Activated CD4-positive, alpha-beta T cell treated with anti-CD3 and anti-CD28 coated beads, Interleukin-2, amount 10 ng/mL, durations not matched to agents 24 days and 14 days (primary cell): ENCODE measurements at regions of chrX and their contacts with region 1.

Region 1: DNA sequence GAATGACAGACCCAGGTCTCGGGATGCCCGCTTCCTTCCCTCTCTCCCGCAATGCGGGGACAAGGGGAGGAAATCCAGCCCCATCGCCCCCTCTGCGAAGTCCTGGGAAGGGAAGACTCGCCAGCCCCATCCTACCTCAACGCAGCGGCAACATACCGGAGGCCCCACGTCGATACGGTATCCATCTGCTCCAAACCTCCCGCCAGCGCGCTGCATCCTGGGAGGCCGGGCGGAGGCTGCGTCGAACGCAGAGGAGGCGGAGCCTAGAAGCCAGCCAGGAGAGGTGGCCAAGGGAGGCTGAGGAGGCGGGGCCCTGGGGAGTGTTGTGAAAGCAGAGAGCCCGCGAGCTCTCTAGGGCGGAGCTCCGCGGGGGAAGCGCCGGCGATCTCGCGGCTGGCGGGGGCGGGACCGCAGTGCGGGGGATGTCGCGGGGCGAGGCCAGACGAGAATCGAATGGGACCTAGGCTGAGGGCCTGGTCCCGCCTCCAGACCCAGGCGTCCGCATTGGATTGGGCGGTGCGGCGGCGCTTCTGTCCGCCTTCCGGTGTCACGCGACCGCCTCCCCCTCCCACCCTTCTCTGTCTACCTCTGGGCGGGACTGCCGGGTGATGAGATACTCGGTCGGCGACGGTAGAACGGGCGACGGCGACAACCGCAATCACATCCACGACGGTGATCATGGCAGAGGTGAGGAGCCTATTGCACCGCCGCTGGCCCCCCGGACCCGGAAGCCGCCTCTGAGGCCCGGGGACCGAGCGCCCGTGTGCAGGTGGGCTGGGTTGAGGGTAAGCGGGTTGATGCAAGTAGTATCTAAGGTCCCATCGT is at the starts of genes FANCB and MOSPD2:
- DNase-seq: peak; percentile 98
- H3K4me3 Mint-ChIP-seq: peak within 1 kb of the TSS; percentile 88
- H3K27ac Mint-ChIP-seq: peak within 1 kb of the TSS; percentile 92
- H3K4me1 Mint-ChIP-seq: peaks cover 16% of the 10 kb centered on the region
- H3K27me3 Mint-ChIP-seq: no peaks in the 10 kb centered on the region
- total RNA-seq, gene FANCB: 18.9 TPM in 2 replicates
- total RNA-seq, gene MOSPD2: 15.3 and 16.0 TPM in 2 replicates

Region 2: GRCh38 chrX:14798805-14799397 is 74.2 kb before region 1 on chrX:
- intact Hi-C with region 1: loop called (anchors 5 kb)
- DNase-seq: no peak
- H3K4me3 Mint-ChIP-seq: no peak overlapping the region
- H3K27ac Mint-ChIP-seq: peak overlapping the region; percentile 65
- H3K4me1 Mint-ChIP-seq: peaks cover 4% of the 10 kb centered on the region
- H3K27me3 Mint-ChIP-seq: no peaks in the 10 kb centered on the region

Region 3: DNA sequence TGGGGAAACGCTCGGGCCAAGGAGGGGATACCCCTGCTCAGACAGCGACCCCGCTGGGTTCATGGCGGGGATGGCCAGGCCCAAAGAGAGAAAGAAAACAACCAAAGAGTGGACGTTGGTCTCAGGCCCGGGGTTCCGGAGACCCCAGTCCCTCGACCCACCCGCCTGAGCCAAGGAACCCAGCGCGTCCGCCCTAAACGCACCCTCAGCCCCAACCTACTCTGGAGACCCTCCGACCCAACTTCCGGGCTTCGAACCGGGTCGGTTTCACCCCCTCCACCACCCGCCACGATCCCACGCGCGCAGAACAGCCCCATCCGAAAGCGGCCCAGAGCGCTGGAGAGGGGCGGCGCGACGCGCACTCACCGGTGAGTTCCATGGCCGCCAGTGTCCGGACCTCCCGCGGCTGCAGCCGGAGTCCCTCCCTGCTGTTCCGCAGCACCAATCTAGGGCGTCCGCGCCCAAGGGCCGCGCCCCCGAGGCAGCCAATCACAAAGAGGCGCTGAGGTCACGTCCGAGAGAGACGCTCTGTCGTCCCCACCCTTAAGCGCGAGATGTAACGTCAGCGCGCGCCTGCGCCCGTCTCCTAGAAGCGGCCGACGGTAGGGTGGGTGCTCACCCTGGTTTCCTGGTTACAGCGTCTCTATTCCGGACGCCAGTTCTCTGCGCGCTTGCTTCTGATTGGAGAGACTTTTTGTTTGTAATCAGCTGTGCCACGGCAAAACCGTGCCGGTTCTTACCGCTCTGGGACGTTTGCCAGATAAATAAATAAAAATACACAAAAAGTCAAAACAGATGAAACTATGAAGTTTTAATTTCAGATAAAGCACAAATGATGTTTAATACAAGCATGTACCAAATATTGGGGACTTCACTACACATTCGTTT is 462.3 kb after region 1 on chrX and contains the start of gene PIGA:
- intact Hi-C with region 1: loop called (anchors 10 kb)
- DNase-seq: peak; percentile 97
- H3K4me3 Mint-ChIP-seq: peak within 1 kb of the TSS; percentile 94
- H3K27ac Mint-ChIP-seq: peak within 1 kb of the TSS; percentile 94
- H3K4me1 Mint-ChIP-seq: peaks cover 9% of the 10 kb centered on the region
- H3K27me3 Mint-ChIP-seq: peaks cover 11% of the 10 kb centered on the region
- total RNA-seq, gene PIGA: 29.4 and 33.9 TPM in 2 replicates